ENCODE measurements at regions of chr9 and their contacts with region 1.

Region 1: DNA sequence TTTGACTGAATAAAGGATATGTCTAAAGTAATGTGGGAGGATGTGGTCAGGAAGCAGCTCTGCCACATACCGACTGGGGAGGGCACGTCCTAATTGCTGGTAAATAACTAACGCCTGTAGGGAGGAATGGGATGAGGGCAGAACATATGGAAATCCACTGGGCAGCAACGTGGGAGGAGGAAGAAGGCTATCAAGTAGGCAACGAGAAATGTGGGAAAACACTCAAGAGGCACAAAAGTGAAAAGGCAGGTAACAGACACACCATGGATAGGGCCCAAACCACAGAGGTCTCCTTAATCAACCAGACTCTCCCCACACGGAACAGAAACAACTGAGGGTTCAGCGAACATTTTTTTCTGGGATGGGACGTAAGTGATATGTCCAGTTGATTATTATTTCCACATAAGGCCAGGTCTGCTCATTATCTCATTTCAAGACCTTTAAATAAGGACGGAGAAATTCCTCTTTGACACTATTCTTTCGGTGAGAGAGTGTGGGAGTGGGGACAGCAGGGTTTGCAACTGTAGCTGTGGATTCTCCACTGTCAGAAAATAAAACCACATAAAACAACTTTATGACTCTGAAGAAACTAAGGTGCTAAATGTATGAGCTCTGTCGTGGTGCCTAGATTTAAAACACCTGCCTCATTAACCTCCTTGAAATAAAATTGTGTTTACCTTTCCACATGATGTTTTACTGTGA is 17.0 kb downstream of the IARS1 start:
- H3K4me3 Mint-ChIP-seq: no peak overlapping the region
- H3K27ac Mint-ChIP-seq: no peak overlapping the region
- H3K4me1 Mint-ChIP-seq: peaks cover 7% of the 10 kb centered on the region
- H3K27me3 Mint-ChIP-seq: no peaks in the 10 kb centered on the region

Region 2: GRCh38 chr9:92223758-92224157 is 52.7 kb before region 1 on chr9:
- intact Hi-C with region 1: no loop called
- H3K4me3 Mint-ChIP-seq: no peak overlapping the region
- H3K27ac Mint-ChIP-seq: no peak overlapping the region
- H3K4me1 Mint-ChIP-seq: no peaks in the 10 kb centered on the region
- H3K27me3 Mint-ChIP-seq: no peaks in the 10 kb centered on the region

Region 3: DNA sequence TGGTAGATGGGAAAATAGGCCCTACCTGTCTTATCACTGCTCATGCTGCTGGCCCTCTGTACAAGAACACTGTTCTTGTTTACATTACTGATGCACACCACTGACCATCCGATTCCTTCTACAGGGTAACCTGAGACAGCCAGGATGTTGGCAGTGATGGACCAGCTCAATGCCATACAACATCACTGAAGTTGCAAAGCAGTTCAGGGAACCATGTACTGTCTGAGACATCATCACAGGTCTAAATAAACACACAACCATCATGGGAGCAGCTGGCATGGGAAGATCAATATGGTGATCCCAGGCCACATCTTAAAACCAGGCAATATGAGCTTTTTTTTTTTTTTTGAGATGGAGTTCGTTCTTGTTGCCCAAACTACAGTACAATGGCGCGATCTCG is 42.0 kb before region 1 on chr9:
- intact Hi-C with region 1: no loop called
- H3K4me3 Mint-ChIP-seq: no peak overlapping the region
- H3K27ac Mint-ChIP-seq: no peak overlapping the region
- H3K4me1 Mint-ChIP-seq: no peaks in the 10 kb centered on the region
- H3K27me3 Mint-ChIP-seq: no peaks in the 10 kb centered on the region

Region 4: DNA sequence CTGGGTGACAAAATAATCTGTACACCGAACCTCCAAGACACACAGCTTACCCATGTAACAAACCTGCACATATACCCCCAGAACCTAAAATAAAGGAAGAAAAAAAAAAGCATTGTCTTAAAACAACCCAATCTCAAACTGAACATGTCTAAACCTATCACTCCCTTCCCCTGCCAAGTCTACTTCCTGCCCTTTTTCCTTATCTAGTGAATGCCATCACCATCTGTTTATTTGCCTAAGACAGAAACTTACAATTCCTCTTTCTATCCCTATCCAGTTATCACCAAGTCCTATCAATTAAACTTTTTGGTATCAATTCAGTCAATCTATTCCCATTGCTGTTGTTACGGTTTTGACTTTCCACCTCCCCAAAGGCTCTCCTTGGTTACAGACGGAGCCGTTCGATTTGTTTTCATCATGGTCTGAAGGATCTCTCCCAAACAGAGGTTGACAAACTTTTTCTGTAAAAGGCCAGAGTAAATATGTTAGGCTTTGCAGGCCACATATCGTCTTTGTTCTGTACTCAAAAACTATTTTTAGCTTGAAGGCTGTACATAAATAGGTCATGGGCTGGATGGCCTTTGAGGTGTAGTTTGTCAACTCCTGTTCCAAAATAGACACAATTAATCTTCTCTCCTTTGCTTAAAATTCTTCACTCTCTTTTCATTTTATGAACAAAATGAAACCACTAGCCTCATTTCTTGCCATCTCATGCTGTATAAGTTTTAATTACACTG is 36.6 kb after region 1 on chr9:
- intact Hi-C with region 1: loop called (anchors 5 kb)
- H3K4me3 Mint-ChIP-seq: no peak overlapping the region
- H3K27ac Mint-ChIP-seq: peak overlapping the region; percentile 21
- H3K4me1 Mint-ChIP-seq: peaks cover 19% of the 10 kb centered on the region
- H3K27me3 Mint-ChIP-seq: no peaks in the 10 kb centered on the region